ENCODE measurements at regions of chr14 and their contacts with region 1.

Region 1: DNA sequence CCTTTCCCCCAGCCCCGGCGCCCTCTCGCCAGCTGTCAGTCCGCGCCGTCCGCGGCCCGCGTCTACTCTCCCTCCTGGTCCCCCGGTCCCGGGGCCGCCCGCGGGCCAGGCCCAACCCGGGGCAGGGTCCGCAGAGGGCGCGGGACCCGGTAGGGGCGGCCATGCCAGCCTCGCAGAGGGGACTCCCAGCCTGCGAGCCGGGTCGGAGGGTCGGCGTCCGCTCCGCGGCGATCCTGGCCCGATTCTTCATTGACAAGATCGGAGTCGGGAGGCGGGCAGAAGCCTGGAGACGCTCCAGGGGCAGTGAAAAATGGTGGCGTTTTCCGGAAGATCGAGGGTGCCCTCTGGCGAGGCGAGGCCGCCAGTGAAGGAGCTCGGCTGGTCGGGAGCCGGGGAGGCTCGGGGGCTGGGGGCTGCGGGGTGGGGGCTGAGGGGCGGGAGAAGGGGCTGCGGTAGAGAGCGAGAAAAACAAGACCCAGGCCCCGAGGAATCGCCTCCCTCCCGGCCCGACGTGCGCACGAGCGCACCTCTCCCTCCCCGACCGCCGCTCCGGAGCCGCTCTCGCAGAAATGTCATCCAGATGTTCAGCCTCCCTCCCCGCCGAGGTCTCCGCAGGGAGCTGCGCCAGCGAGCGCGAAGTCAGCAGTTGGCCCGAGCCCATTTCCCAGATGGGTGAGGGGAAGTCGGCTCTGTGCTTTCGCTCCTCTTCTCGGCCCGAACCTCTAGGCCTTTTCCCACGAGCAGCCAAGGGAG is 647 bp upstream of the TGFB3 start:
- DNase-seq: peak; percentile 41 to 87 (median 71)
- ATAC-seq: peak; percentile 76 to 82 (median 78)
- H3K4me3 ChIP-seq: peak overlapping the region; percentile 56 to 64
- H3K4me3 Mint-ChIP-seq: peak overlapping the region; percentile 78 to 88 (median 80)
- H3K27ac ChIP-seq: peak overlapping the region; percentile 69
- H3K27ac Mint-ChIP-seq: peak overlapping the region in 1 of 2 donors; percentile 87
- H3K4me1 ChIP-seq: peaks cover 3 to 49% of the 10 kb centered on the region in 2 experiments
- H3K4me1 Mint-ChIP-seq: peaks cover 57 to 62% (median 57%) of the 10 kb centered on the region in 3 donors
- H3K27me3 ChIP-seq: no peaks in the 10 kb centered on the region
- H3K27me3 Mint-ChIP-seq: no peaks in the 10 kb centered on the region

Region 2: DNA sequence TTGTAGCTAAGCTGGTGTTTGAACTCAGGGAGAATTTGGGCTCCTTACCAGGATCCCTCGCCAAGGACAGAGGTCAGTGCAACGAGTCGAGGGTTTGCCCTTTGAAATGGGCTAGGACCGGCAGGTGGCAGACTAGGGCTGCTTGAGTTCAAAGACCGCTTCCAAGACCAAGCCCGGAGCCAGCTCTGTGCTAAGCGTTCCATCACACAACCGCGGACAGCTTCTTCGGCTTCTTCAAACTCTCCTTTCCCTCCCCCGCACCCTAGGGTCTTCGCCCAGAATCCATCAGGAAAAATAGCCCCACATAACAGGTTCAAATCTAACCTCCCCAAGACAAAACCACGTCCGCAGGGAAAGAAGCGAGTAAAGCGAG is 404.7 kb before region 1 on chr14:
- CTCF ChIA-PET with region 1: interaction called in 1 of 2 experiments, 12 read pairs
- POLR2A ChIA-PET with region 1: no interaction called
- DNase-seq: peak; percentile 15 to 78 (median 58)
- ATAC-seq: peak; percentile 84 to 91 (median 86)
- H3K4me3 ChIP-seq: peak overlapping the region; percentile 74 to 86
- H3K4me3 Mint-ChIP-seq: no peak overlapping the region
- H3K27ac ChIP-seq: peak overlapping the region; percentile 36
- H3K27ac Mint-ChIP-seq: peak overlapping the region; percentile 77 to 86
- H3K4me1 ChIP-seq: peaks cover 7 to 26% of the 10 kb centered on the region in 2 experiments
- H3K4me1 Mint-ChIP-seq: peaks cover 4 to 11% (median 7%) of the 10 kb centered on the region in 3 donors
- H3K27me3 ChIP-seq: peaks cover 0 to 2% of the 10 kb centered on the region in 2 experiments
- H3K27me3 Mint-ChIP-seq: no peaks in the 10 kb centered on the region

Region 3: DNA sequence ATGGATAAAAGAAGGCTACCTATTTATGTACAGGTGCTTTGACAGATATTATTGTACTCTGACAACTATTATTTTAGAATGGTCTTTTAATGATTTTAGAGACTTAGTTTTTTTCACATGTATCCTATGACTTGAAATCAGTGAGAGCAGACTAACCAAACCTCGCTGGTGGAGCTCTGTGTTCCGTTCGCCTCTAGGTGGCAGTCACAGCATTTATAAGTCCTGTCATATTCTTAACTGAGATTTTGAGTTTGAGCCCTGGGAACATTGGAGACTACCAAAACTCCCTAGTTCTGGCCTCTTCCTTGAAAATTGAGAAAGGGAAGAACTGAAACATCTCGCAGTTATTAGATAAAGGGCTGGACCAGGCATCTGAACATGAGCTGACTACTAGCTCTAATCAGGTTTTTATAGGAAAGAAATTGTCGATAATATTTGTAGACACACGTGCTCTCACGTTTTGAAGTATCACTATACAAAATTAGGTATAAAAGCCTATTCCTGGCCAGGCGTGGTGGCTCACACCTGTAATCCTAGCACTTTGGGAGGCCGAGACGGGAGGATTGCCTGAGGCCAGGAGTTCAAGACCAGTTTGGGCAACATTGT is 273.1 kb before region 1 on chr14:
- CTCF ChIA-PET with region 1: interaction called, 5 to 67 read pairs
- POLR2A ChIA-PET with region 1: no interaction called
- DNase-seq: peak; percentile 5 to 79 (median 53)
- ATAC-seq: peak; percentile 43 to 74 (median 64)
- H3K4me3 ChIP-seq: no peak overlapping the region
- H3K4me3 Mint-ChIP-seq: no peak overlapping the region
- H3K27ac ChIP-seq: no peak overlapping the region
- H3K27ac Mint-ChIP-seq: no peak overlapping the region
- H3K4me1 ChIP-seq: no peaks in the 10 kb centered on the region
- H3K4me1 Mint-ChIP-seq: no peaks in the 10 kb centered on the region
- H3K27me3 ChIP-seq: no peaks in the 10 kb centered on the region
- H3K27me3 Mint-ChIP-seq: no peaks in the 10 kb centered on the region

Region 4: GRCh38 chr14:75906676-75907280 is 75.7 kb before region 1 on chr14:
- CTCF ChIA-PET with region 1: interaction called, 13 to 33 read pairs
- POLR2A ChIA-PET with region 1: no interaction called
- DNase-seq: peak in 33 of 35 experiments; percentile 11 to 81 (median 52)
- ATAC-seq: peak in 3 of 4 experiments; percentile 40 to 58 (median 51)
- H3K4me3 ChIP-seq: no peak overlapping the region
- H3K4me3 Mint-ChIP-seq: no peak overlapping the region
- H3K27ac ChIP-seq: no peak overlapping the region
- H3K27ac Mint-ChIP-seq: no peak overlapping the region
- H3K4me1 ChIP-seq: no peaks in the 10 kb centered on the region
- H3K4me1 Mint-ChIP-seq: no peaks in the 10 kb centered on the region
- H3K27me3 ChIP-seq: no peaks in the 10 kb centered on the region
- H3K27me3 Mint-ChIP-seq: no peaks in the 10 kb centered on the region

Measured in T-cell (primary cell).